ENCODE measurements at regions of chr14 and their contacts with region 1.

Region 1: GRCh38 chr14:24058260-24058950 is 6.6 kb downstream of the CARMIL3 start:
- DNase-seq: peak; percentile 44
- H3K4me3 ChIP-seq: no peak overlapping the region
- H3K27ac ChIP-seq: no peak overlapping the region
- H3K4me1 ChIP-seq: no peaks in the 10 kb centered on the region
- H3K27me3 ChIP-seq: no peaks in the 10 kb centered on the region
- CTCF ChIP-seq: peak; percentile 62 to 64
- POLR2A ChIP-seq: no peak

Region 2: GRCh38 chr14:23793532-23793931 is 264.9 kb before region 1 on chr14:
- CTCF ChIA-PET with region 1: no interaction called
- POLR2A ChIA-PET with region 1: no interaction called
- dilution Hi-C with region 1: no loop called
- intact Hi-C with region 1: no loop called
- DNase-seq: no peak
- H3K4me3 ChIP-seq: no peak overlapping the region
- H3K27ac ChIP-seq: no peak overlapping the region
- H3K4me1 ChIP-seq: no peaks in the 10 kb centered on the region
- H3K27me3 ChIP-seq: peaks cover 2 to 3% of the 10 kb centered on the region in 2 experiments
- CTCF ChIP-seq: no peak
- POLR2A ChIP-seq: no peak

Region 3: GRCh38 chr14:23929822-23930294 is 128.5 kb before region 1 on chr14:
- CTCF ChIA-PET with region 1: no interaction called
- POLR2A ChIA-PET with region 1: no interaction called
- dilution Hi-C with region 1: no loop called
- intact Hi-C with region 1: no loop called
- DNase-seq: peak; percentile 74
- H3K4me3 ChIP-seq: no peak overlapping the region
- H3K27ac ChIP-seq: no peak overlapping the region
- H3K4me1 ChIP-seq: no peaks in the 10 kb centered on the region
- H3K27me3 ChIP-seq: peaks cover 0 to 5% of the 10 kb centered on the region in 2 experiments
- CTCF ChIP-seq: peak; percentile 93
- POLR2A ChIP-seq: no peak

Region 4: GRCh38 chr14:24013654-24014514 is 44.5 kb before region 1 on chr14:
- CTCF ChIA-PET with region 1: interaction called, 4 read pairs
- POLR2A ChIA-PET with region 1: no interaction called
- dilution Hi-C with region 1: no loop called
- intact Hi-C with region 1: loop called (anchors 1 kb)
- DNase-seq: peak; percentile 82
- H3K4me3 ChIP-seq: no peak overlapping the region
- H3K27ac ChIP-seq: no peak overlapping the region
- H3K4me1 ChIP-seq: peaks cover 3% of the 10 kb centered on the region
- H3K27me3 ChIP-seq: peaks cover 0 to 2% of the 10 kb centered on the region in 2 experiments
- CTCF ChIP-seq: peak; percentile 64 to 72
- POLR2A ChIP-seq: no peak

Region 5: GRCh38 chr14:24075485-24076301 is 17.3 kb after region 1 on chr14:
- CTCF ChIA-PET with region 1: interaction called, 51 read pairs
- POLR2A ChIA-PET with region 1: no interaction called
- dilution Hi-C with region 1: no loop called
- intact Hi-C with region 1: no loop called
- DNase-seq: no peak
- H3K4me3 ChIP-seq: no peak overlapping the region
- H3K27ac ChIP-seq: no peak overlapping the region
- H3K4me1 ChIP-seq: no peaks in the 10 kb centered on the region
- H3K27me3 ChIP-seq: peaks cover 11 to 14% of the 10 kb centered on the region in 2 experiments
- CTCF ChIP-seq: no peak
- POLR2A ChIP-seq: no peak

Region 6: DNA sequence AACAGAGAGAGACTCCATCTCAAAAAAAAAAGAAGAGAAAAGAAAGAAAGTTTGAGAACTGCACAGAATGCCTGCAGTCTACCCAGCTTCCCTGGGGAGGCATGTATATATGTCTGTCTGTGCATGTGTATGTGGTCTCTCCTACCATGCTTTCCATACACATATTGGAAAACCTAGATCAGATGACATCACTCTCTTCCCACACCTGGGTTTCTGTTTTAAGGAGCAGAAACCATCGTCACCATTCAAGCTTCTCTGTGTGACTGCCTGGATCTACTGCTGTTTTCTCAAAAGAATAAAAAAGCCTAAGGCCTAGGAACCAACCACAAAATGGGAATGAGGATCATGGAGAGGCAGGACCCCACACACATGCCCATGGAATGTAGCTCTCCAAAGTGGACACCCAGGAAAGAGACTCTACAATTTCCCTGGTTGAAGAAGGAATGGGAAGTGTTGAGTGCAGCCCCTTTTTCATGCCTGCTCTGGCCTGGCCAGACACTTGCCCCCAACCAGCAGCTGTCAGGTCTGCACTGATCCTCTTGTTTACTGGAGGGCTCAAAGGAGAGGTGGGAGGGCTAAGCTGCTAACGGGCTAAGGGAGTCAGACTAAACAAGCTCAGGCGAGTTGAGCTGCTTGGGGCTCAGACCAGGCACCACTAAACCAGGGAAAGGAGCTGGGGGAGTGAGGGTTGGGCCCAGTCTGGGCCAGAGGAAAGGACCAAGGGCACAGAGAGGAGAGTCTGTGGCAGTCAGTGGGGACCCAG is 28.0 kb after region 1 on chr14:
- CTCF ChIA-PET with region 1: interaction called, 319 read pairs
- POLR2A ChIA-PET with region 1: interaction called, 8 read pairs
- dilution Hi-C with region 1: no loop called
- intact Hi-C with region 1: loop called (anchors 1 kb)
- DNase-seq: no peak
- H3K4me3 ChIP-seq: no peak overlapping the region
- H3K27ac ChIP-seq: no peak overlapping the region
- H3K4me1 ChIP-seq: no peaks in the 10 kb centered on the region
- H3K27me3 ChIP-seq: peaks cover 14 to 20% of the 10 kb centered on the region in 2 experiments
- CTCF ChIP-seq: no peak
- POLR2A ChIP-seq: no peak

Region 7: GRCh38 chr14:24108336-24108874 is 50.0 kb after region 1 on chr14:
- CTCF ChIA-PET with region 1: interaction called, 420 read pairs
- POLR2A ChIA-PET with region 1: interaction called, 7 read pairs
- dilution Hi-C with region 1: no loop called
- intact Hi-C with region 1: loop called (anchors 1 kb)
- DNase-seq: no peak
- H3K4me3 ChIP-seq: no peak overlapping the region
- H3K27ac ChIP-seq: no peak overlapping the region
- H3K4me1 ChIP-seq: peaks cover 18% of the 10 kb centered on the region
- H3K27me3 ChIP-seq: no peaks in the 10 kb centered on the region
- CTCF ChIP-seq: no peak
- POLR2A ChIP-seq: no peak

Region 8: GRCh38 chr14:24146978-24147760 is 88.8 kb after region 1 on chr14 and contains the start of gene RNF31:
- CTCF ChIA-PET with region 1: interaction called, 22 read pairs
- POLR2A ChIA-PET with region 1: no interaction called
- dilution Hi-C with region 1: no loop called
- intact Hi-C with region 1: no loop called
- DNase-seq: peak; percentile 97
- H3K4me3 ChIP-seq: peak within 1 kb of the TSS; percentile 59 to 86 (median 79)
- H3K27ac ChIP-seq: peak within 1 kb of the TSS; percentile 52
- H3K4me1 ChIP-seq: peaks cover 17% of the 10 kb centered on the region
- H3K27me3 ChIP-seq: no peaks in the 10 kb centered on the region
- CTCF ChIP-seq: no peak
- POLR2A ChIP-seq: peak; percentile 75
- total RNA-seq, gene RNF31: 66.5 and 69.7 TPM in 2 replicates

Region 9: DNA sequence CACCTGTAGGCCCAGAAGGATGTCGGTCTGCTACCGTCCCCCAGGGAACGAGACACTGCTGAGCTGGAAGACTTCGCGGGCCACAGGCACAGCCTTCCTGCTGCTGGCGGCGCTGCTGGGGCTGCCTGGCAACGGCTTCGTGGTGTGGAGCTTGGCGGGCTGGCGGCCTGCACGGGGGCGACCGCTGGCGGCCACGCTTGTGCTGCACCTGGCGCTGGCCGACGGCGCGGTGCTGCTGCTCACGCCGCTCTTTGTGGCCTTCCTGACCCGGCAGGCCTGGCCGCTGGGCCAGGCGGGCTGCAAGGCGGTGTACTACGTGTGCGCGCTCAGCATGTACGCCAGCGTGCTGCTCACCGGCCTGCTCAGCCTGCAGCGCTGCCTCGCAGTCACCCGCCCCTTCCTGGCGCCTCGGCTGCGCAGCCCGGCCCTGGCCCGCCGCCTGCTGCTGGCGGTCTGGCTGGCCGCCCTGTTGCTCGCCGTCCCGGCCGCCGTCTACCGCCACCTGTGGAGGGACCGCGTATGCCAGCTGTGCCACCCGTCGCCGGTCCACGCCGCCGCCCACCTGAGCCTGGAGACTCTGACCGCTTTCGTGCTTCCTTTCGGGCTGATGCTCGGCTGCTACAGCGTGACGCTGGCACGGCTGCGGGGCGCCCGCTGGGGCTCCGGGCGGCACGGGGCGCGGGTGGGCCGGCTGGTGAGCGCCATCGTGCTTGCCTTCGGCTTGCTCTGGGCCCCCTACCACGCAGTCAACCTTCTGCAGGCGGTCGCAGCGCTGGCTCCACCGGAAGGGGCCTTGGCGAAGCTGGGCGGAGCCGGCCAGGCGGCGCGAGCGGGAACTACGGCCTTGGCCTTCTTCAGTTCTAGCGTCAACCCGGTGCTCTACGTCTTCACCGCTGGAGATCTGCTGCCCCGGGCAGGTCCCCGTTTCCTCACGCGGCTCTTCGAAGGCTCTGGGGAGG is 252.5 kb after region 1 on chr14 and contains the start of gene LTB4R:
- CTCF ChIA-PET with region 1: interaction called, 13 read pairs
- POLR2A ChIA-PET with region 1: no interaction called
- dilution Hi-C with region 1: no loop called
- intact Hi-C with region 1: no loop called
- DNase-seq: peak; percentile 88
- H3K4me3 ChIP-seq: peak within 1 kb of the TSS in 1 of 3 experiments; percentile 19
- H3K27ac ChIP-seq: peak within 1 kb of the TSS; percentile 91
- H3K4me1 ChIP-seq: peaks cover 60% of the 10 kb centered on the region
- H3K27me3 ChIP-seq: no peaks in the 10 kb centered on the region
- CTCF ChIP-seq: peak; percentile 20 to 53
- POLR2A ChIP-seq: peak; percentile 34
- total RNA-seq, gene LTB4R: 6.2 and 10.5 TPM in 2 replicates